ENCODE measurements at regions of chr15 and their contacts with region 1.

Region 1: DNA sequence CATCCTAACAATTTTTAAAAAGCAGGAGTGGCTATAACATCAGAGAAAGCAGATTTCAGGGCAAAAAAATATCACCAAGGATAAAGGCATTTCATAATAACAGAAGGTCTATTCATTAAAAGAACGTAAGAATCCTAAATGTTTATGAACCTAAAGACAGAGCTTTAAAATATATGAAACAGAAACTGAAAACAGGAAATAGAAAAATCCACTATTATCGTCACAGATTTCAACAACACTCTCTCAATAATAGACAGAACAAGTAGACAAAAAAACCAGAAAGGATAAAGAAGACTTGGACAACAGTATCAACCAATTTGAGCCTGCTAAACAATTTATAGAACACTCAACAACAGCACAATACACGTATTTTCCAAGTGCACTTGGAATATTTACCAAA is 71.4 kb downstream of the FBXL22 start:
- DNase-seq: peak in 6 of 9 donors; percentile 22 to 63 (median 52)
- ATAC-seq: peak; percentile 83
- H3K4me3 ChIP-seq: peak overlapping the region; percentile 36
- H3K4me3 Mint-ChIP-seq: peak overlapping the region; percentile 31 to 82 (median 78)
- H3K27ac ChIP-seq: peak overlapping the region; percentile 52
- H3K27ac Mint-ChIP-seq: peak overlapping the region; percentile 89 to 96 (median 92)
- H3K4me1 ChIP-seq: peaks cover 17 to 25% of the 10 kb centered on the region in 2 donors
- H3K4me1 Mint-ChIP-seq: peaks cover 22 to 56% (median 50%) of the 10 kb centered on the region in 7 donors
- H3K27me3 ChIP-seq: no peaks in the 10 kb centered on the region
- H3K27me3 Mint-ChIP-seq: no peaks in the 10 kb centered on the region

Region 2: GRCh38 chr15:63610200-63610841 is 58.3 kb before region 1 on chr15:
- CTCF ChIA-PET with region 1: interaction called, 4 read pairs
- POLR2A ChIA-PET with region 1: interaction called, 3 read pairs
- intact Hi-C with region 1: loop called (anchors 2 kb)
- DNase-seq: peak in 8 of 9 donors; percentile 43 to 71 (median 64)
- ATAC-seq: peak; percentile 94
- H3K4me3 ChIP-seq: no peak overlapping the region
- H3K4me3 Mint-ChIP-seq: peak overlapping the region in 7 of 10 donors; percentile 9 to 68 (median 42)
- H3K27ac ChIP-seq: peak overlapping the region; percentile 69
- H3K27ac Mint-ChIP-seq: peak overlapping the region; percentile 74 to 94 (median 84)
- H3K4me1 ChIP-seq: peaks cover 23 to 25% of the 10 kb centered on the region in 2 donors
- H3K4me1 Mint-ChIP-seq: peaks cover 23 to 51% (median 41%) of the 10 kb centered on the region in 7 donors
- H3K27me3 ChIP-seq: no peaks in the 10 kb centered on the region
- H3K27me3 Mint-ChIP-seq: no peaks in the 10 kb centered on the region

Region 3: GRCh38 chr15:63686352-63686751 is 17.8 kb after region 1 on chr15:
- CTCF ChIA-PET with region 1: no interaction called
- POLR2A ChIA-PET with region 1: interaction called, 4 read pairs
- intact Hi-C with region 1: loop called in 1 of 2 experiments (anchors 2 kb)
- DNase-seq: no peak
- ATAC-seq: no peak
- H3K4me3 ChIP-seq: no peak overlapping the region
- H3K4me3 Mint-ChIP-seq: no peak overlapping the region
- H3K27ac ChIP-seq: no peak overlapping the region
- H3K27ac Mint-ChIP-seq: peak overlapping the region in 1 of 9 donors; percentile 32
- H3K4me1 ChIP-seq: no peaks in the 10 kb centered on the region
- H3K4me1 Mint-ChIP-seq: peaks cover 0 to 3% (median 0%) of the 10 kb centered on the region in 7 donors
- H3K27me3 ChIP-seq: no peaks in the 10 kb centered on the region
- H3K27me3 Mint-ChIP-seq: no peaks in the 10 kb centered on the region

Region 4: GRCh38 chr15:63701365-63701764 is 32.8 kb after region 1 on chr15:
- CTCF ChIA-PET with region 1: interaction called, 4 read pairs
- POLR2A ChIA-PET with region 1: no interaction called
- intact Hi-C with region 1: loop called in 1 of 2 experiments (anchors 5 kb)
- DNase-seq: no peak
- ATAC-seq: no peak
- H3K4me3 ChIP-seq: no peak overlapping the region
- H3K4me3 Mint-ChIP-seq: no peak overlapping the region
- H3K27ac ChIP-seq: no peak overlapping the region
- H3K27ac Mint-ChIP-seq: peak overlapping the region in 2 of 9 donors; percentile 7 to 14
- H3K4me1 ChIP-seq: no peaks in the 10 kb centered on the region
- H3K4me1 Mint-ChIP-seq: peaks cover 0 to 8% (median 0%) of the 10 kb centered on the region in 7 donors
- H3K27me3 ChIP-seq: no peaks in the 10 kb centered on the region
- H3K27me3 Mint-ChIP-seq: no peaks in the 10 kb centered on the region

Region 5: DNA sequence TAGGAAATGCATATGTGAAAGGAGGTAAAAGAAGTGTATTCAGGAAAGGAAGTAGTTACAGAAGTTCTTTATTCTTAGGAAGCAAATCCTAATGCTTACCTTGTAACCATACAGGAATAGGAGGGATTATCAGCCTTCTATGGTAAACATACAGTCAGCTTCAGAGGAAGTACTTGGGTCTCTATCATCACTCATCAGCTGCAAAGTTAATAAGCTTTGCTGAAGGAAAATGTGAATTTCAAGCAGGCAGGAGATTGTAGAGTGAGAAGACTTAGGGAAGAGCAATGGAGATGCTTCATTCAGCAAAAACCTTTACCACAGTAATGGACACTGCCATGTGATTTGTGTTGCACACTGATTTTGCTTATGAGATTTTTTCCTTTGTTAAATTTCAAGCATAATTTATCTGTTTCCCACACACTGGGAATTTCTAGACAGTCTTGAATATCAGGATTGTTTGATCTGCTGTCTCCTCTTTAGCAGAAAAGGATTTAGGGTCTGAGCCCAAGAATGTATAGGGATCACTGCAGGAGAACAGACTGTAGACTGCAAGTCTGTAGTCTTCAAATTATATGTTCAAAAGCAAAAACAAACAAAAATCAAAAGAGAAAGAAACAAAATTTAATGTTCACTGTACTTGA is 942.6 kb after region 1 on chr15:
- CTCF ChIA-PET with region 1: no interaction called
- POLR2A ChIA-PET with region 1: no interaction called
- intact Hi-C with region 1: no loop called
- DNase-seq: no peak
- ATAC-seq: no peak
- H3K4me3 ChIP-seq: no peak overlapping the region
- H3K4me3 Mint-ChIP-seq: peak overlapping the region in 8 of 10 donors; percentile 1 to 60 (median 41)
- H3K27ac ChIP-seq: no peak overlapping the region
- H3K27ac Mint-ChIP-seq: peak overlapping the region in 8 of 9 donors; percentile 48 to 92 (median 68)
- H3K4me1 ChIP-seq: peaks cover 0 to 23% of the 10 kb centered on the region in 2 donors
- H3K4me1 Mint-ChIP-seq: peaks cover 33 to 64% (median 42%) of the 10 kb centered on the region in 7 donors
- H3K27me3 ChIP-seq: no peaks in the 10 kb centered on the region
- H3K27me3 Mint-ChIP-seq: no peaks in the 10 kb centered on the region

Measured in naive thymus-derived CD4-positive, alpha-beta T cell (primary cell).